ENCODE measurements at regions of chr5 and their contacts with region 1.

Region 1: GRCh38 chr5:94793113-94793815 is 174.8 kb downstream of the SLF1 start:
- DNase-seq: peak; percentile 22
- H3K4me3 Mint-ChIP-seq: peak overlapping the region; percentile 61
- H3K27ac Mint-ChIP-seq: peak overlapping the region; percentile 93
- H3K4me1 Mint-ChIP-seq: peaks cover 37% of the 10 kb centered on the region
- H3K27me3 Mint-ChIP-seq: peaks cover 16% of the 10 kb centered on the region

Region 2: GRCh38 chr5:94577466-94578245 is 215.6 kb before region 1 on chr5:
- intact Hi-C with region 1: loop called (anchors 5 kb)
- DNase-seq: no peak
- H3K4me3 Mint-ChIP-seq: no peak overlapping the region
- H3K27ac Mint-ChIP-seq: no peak overlapping the region
- H3K4me1 Mint-ChIP-seq: peaks cover 32% of the 10 kb centered on the region
- H3K27me3 Mint-ChIP-seq: peaks cover 2% of the 10 kb centered on the region

Region 3: DNA sequence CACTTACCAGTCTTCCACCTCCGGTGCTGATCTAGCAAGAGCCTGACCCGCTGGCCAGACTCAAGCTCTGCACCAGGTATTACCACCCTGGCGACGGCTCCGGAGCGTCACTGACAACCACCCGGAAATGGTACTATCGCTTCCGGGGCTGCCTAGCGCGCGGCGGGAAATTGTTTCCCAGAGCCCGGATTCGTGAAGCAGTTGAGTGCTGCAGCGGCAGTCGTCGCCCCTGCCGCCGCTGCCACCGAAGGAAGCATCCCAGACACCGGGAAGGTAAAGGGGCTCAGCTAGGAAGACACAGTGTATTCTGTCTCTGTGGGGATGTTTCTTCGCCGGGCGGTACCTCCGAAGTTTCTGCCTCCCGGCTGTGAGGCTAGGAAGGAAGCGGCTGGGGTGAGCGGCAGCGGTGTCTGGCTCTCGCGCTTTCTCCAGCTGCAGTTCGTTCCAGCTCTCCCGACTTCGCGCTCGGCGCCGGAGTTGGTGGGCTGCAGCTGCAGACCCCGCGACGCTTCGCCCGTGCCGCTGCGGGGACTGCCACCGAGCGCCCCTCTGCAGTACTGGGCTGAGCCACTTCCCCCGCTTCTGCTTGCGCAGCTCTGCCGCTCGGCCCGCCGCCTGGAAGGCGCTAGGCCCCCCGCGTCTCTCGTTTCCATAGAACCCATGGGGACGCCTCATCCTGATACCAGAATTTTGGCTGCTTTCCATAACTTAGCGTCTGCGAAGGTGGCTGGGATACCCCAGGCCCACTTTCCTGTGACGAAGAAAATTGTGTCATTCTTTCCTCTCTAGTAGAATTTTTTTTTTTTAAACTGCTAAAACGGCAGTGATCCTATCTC is 174.6 kb before region 1 on chr5 and contains the starts of genes KIAA0825 and SLF1:
- intact Hi-C with region 1: loop called (anchors 1 kb)
- DNase-seq: peak; percentile 83
- H3K4me3 Mint-ChIP-seq: peak within 1 kb of the TSS; percentile 97
- H3K27ac Mint-ChIP-seq: peak within 1 kb of the TSS; percentile 96
- H3K4me1 Mint-ChIP-seq: peaks cover 37% of the 10 kb centered on the region
- H3K27me3 Mint-ChIP-seq: no peaks in the 10 kb centered on the region
- total RNA-seq, gene KIAA0825: 0.32 and 0.62 TPM in 2 replicates
- total RNA-seq, gene SLF1: 12.7 and 13.7 TPM in 2 replicates

Region 4: GRCh38 chr5:95022967-95023695 is 229.9 kb after region 1 on chr5:
- intact Hi-C with region 1: loop called (anchors 10 kb)
- DNase-seq: no peak
- H3K4me3 Mint-ChIP-seq: no peak overlapping the region
- H3K27ac Mint-ChIP-seq: peak overlapping the region; percentile 36
- H3K4me1 Mint-ChIP-seq: peaks cover 33% of the 10 kb centered on the region
- H3K27me3 Mint-ChIP-seq: peaks cover 4% of the 10 kb centered on the region